ENCODE measurements at regions of chr12 and their contacts with region 1.

Region 1: DNA sequence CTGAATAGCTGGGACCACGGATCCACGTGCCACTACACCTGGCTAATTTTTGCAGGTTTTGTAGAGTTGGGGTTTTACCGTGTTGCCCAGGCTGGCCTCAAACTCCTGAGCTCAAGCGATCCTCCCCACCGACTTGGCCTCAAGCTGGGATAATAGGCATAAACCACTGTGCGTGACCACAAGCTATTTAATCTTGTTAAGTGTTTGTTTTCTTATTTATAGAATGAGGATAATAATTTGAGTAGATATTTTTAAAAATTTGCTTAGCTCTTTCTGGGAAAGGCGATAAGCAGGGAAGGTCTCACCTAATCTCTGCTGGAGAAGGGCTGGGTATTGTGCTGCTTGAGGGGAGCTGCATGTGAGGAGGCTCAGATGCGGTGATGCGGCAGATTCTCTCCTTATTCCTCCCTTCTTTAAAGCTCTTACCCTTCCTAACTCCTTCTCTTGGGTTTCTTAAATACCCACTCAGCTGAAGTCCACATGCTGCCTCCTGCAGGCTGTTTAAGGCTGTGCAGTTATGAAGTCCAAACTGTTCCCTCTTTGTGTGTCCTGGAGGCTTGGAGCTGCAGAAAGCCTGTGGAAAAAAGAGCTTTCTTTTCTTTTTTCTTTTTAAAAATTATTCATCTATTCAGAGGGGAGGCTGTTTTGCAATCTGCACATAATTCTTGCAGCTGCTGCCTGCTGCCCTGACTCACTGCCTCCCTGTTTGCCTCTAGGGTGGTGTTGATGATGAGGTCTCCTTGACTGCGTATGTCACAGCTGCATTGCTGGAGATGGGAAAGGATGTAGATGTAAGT is 37.9 kb downstream of the A2ML1 start:
- DNase-seq: peak; percentile 46
- H3K4me3 Mint-ChIP-seq: no peak overlapping the region
- H3K27ac Mint-ChIP-seq: no peak overlapping the region
- H3K4me1 Mint-ChIP-seq: no peaks in the 10 kb centered on the region
- H3K27me3 Mint-ChIP-seq: no peaks in the 10 kb centered on the region

Region 2: DNA sequence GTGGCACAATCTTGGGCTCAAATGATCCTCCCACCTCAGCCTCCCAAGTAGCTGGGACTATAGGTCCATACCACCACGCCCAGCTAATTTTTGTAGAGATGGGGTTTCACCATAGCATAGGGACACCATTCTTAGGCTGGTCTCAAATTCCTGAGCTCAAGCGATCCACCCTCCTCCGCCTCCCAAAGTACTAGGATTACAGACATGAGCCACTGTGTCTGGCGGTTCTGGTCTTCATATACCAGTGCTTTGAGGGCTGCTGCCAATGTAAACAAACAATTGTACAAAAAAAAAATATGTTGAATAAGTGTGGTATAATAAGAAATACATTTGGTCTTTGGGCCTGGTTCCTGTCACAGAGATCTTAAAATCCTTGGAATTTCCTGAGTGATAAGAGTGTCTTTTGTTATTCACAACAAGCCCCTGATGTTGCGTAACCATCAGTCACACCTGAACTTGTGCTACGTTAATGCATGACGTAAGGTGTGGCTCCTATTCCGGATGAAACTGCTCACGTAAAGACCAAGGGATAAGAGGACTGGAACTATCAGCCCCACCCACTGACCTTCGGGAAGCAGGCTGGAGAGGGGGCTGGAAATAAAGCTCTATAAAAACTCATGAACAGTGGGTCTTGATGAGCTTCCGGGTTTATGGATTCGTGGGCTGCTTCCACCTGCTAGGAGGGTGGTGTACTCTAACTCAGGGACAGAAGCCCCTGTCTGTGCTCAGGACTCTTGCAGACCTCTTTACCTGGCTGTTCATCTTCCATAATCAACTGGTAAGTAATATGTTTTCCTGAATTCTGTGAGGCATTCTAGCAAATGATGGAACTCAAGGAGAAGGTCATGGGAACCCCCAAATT is 179.1 kb before region 1 on chr12:
- CTCF ChIA-PET with region 1: interaction called, 31 read pairs
- POLR2A ChIA-PET with region 1: no interaction called
- intact Hi-C with region 1: loop called (anchors 1 kb)
- DNase-seq: no peak
- H3K4me3 Mint-ChIP-seq: no peak overlapping the region
- H3K27ac Mint-ChIP-seq: no peak overlapping the region
- H3K4me1 Mint-ChIP-seq: peaks cover 2% of the 10 kb centered on the region
- H3K27me3 Mint-ChIP-seq: peaks cover 5% of the 10 kb centered on the region

Region 3: GRCh38 chr12:8841778-8842177 is 18.6 kb before region 1 on chr12:
- CTCF ChIA-PET with region 1: interaction called, 12 read pairs
- POLR2A ChIA-PET with region 1: no interaction called
- intact Hi-C with region 1: no loop called
- DNase-seq: no peak
- H3K4me3 Mint-ChIP-seq: no peak overlapping the region
- H3K27ac Mint-ChIP-seq: no peak overlapping the region
- H3K4me1 Mint-ChIP-seq: no peaks in the 10 kb centered on the region
- H3K27me3 Mint-ChIP-seq: peaks cover 16% of the 10 kb centered on the region

Region 4: GRCh38 chr12:8890313-8891085 is 30.1 kb after region 1 on chr12:
- CTCF ChIA-PET with region 1: interaction called, 19 read pairs
- POLR2A ChIA-PET with region 1: no interaction called
- intact Hi-C with region 1: no loop called
- DNase-seq: peak; percentile 65
- H3K4me3 Mint-ChIP-seq: peak overlapping the region; percentile 83
- H3K27ac Mint-ChIP-seq: no peak overlapping the region
- H3K4me1 Mint-ChIP-seq: peaks cover 5% of the 10 kb centered on the region
- H3K27me3 Mint-ChIP-seq: no peaks in the 10 kb centered on the region

Region 5: DNA sequence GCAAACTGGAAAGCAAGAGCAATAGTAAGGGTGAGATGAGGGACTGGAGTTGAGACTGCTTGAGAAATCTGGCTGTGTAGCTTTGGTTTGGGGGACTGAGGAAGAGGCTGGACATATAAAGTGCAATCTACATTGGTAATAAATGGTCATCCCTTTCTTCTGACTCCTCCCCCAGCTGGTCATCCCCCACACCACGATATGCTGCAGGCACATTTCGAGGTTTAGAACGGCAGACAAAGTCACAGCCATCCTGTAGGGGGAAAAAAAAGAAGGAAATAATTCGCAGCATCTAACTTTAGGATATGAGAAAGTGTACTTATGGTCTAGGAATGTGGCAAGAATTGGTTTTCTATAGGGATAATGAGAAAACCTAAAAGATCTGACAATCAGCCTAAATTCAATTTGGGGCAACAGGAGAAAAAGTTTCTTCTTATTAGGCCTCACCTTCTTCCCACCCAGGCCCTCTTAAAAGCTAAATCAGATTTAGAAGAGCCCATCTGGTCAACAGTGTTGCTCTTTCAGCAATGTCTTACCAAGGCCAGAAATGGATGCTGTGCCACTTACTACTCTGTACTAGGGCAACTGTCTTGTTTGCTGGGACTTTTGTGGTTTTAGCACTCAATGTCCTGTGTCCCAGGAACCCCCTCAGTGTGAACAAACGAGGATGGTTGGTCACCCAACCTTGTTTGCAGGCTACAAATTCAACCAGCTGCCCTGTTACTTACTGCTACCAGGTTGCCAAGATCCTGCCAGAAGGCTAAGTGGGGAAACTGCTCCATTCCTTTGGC is 81.5 kb after region 1 on chr12:
- CTCF ChIA-PET with region 1: no interaction called
- POLR2A ChIA-PET with region 1: no interaction called
- intact Hi-C with region 1: no loop called
- DNase-seq: no peak
- H3K4me3 Mint-ChIP-seq: no peak overlapping the region
- H3K27ac Mint-ChIP-seq: peak overlapping the region; percentile 47
- H3K4me1 Mint-ChIP-seq: peaks cover 9% of the 10 kb centered on the region
- H3K27me3 Mint-ChIP-seq: no peaks in the 10 kb centered on the region

Measured in activated CD4-positive, alpha-beta memory T cell treated with anti-CD3 and anti-CD28 coated beads for 36 hours (primary cell).